ENCODE measurements at regions of chr17 and their contacts with region 1.

Region 1: GRCh38 chr17:77331301-77331864 is 190.6 kb downstream of the SEC14L1 start:
- DNase-seq: peak; percentile 89

Region 2: DNA sequence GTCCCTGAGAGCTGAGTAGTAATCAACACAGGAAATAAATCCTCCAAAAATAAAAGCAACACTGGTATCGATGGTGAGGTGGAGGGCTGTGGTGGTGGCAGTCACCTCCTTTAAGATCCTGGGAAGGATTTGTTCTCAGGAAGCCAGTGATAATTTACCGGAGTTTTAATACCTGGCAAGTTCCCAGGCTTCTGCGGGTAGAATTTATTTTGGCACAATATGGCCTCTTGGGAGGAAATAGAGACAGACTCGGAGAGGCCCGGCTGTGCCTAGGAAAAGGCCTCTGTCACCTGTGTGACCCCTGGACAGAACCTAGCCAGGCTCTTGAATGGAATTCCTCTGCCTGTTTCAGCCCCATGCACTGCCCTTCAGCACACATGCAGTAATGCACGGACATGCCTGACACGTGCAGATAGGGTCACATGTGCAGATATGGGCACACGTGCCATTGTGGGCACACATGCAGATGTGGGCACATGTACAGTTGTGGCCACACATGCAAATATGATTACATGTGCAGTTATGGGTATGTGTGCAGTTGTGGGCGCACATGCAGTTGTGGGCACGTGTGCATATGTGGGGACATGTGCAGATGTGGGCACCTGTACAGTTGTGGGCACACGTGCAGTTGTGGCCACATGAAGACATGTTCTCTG is 429.7 kb before region 1 on chr17:
- in situ Hi-C with region 1: no loop called
- DNase-seq: no peak

Region 3: DNA sequence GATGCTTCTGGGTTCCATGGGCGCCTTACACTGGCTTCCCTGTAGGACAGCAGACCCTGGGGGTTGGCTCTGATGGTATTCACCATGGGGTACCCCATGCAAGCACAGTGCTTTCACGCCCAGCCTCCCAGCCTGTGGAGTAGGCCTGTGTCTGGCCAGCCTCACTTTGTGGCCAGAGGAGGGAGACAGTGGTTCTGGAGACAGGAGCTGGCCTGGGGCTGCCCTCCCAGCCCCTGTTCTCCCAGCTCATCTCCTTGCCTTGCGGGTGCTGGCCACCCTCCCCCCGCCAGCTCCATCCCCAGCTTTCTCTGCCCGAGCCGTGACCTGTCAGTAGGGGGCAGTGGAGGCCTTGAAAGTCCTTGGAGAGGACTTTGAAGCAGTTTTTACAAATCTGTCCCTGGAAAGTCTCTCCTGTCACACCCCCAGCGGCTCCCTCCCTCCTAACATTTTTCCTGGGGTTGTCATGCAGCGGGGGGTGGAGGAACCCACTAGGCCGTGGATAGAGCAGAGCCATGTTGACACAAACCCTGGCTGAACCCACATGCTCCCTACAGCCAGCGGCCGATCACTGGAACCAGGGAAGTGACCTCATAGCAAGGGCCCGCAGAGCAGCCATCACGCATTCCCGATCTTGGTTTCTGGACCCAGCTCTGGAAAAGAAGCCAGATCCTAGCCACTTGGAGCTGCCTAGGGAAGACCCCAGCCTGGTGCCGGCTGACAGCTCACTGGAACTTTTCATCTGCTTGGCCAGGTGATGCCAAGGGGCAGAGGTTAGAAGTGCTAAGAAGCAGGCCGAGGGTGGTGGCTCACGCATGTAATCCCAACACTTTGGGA is 98.8 kb after region 1 on chr17:
- in situ Hi-C with region 1: loop called (anchors 25 kb)
- DNase-seq: peak; percentile 98